Cardiac septum (tissue), 1 donor: ENCODE measurements at regions of chr11 and their contacts with region 1.

Region 1: DNA sequence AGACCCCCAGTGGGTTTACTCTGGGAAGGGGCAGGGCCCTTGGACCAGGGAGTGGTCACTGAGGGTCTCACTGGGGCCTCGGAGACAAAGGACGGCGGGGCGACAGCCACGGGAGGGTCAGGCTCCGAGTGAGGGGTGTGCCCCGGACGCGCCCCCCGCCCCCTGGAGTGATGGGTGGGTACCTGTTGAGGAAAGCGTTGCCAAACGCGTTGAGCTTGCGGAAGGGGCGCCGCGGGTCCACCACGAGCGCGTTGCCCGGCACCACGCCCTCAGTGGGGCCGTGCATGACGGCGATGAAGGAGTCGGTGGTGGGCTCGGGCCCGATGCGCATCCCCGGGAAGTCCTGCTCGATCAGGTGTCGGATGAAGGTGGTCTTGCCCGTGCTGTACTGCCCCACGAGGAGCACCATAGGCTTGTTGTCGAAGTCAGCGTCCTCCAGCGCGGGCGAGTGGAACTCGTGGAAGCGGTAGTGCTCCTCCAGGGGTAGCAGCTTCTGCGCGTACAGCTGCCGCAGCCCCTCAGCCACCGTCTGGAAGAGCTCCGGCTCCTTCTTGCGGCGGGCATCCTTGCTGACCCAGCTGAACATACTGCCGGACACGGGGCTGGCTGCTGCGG is 435 bp downstream of the EHD1 start:
- DNase-seq: no peak

Region 2: DNA sequence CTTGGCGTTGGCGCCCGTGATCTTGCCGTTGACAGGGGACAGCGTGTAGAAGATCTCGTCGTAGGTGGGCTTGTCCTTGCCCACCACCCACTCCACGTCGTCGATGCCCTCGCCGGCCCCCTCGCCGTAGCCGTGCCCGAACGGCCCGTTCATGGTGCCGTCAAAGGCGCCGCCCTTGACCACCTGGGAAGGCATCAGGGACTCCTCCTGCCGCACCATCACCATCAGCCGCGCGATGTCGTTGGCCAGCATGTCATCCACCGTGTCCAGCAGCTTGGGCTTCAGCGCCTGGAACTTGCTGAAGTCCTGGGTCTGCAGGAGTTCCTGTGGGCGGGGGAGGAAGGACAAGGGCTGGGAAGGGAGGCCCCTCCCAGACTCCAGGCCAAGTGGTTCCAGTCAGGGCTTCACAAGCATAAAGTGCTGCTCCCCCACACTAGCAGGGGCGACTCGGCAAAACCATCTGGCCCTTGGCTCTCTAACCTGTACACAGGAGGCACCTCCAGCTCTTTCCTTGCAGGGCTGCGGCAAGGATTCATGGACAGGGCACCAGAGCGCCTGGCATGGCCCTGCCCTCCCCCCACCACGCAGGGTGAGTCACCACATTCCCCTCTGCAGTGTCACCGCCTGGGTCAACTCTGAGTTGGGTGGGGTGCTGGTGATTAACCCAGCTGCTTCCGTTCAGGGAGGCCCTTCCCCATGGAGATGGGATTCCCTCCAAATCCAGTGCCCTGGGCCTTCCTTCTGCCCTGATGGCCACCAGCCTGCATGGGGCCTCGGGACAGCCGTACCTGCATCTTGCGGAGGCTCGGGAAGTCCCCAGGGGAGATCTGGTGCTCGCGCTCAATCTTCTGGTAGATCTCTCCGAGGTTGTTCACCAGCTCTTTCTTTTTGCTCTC is 23.2 kb before region 1 on chr11:
- intact Hi-C with region 1: loop called (anchors 2 kb)
- DNase-seq: peak; percentile 95